ENCODE measurements at regions of chr16 and their contacts with region 1.

Region 1: DNA sequence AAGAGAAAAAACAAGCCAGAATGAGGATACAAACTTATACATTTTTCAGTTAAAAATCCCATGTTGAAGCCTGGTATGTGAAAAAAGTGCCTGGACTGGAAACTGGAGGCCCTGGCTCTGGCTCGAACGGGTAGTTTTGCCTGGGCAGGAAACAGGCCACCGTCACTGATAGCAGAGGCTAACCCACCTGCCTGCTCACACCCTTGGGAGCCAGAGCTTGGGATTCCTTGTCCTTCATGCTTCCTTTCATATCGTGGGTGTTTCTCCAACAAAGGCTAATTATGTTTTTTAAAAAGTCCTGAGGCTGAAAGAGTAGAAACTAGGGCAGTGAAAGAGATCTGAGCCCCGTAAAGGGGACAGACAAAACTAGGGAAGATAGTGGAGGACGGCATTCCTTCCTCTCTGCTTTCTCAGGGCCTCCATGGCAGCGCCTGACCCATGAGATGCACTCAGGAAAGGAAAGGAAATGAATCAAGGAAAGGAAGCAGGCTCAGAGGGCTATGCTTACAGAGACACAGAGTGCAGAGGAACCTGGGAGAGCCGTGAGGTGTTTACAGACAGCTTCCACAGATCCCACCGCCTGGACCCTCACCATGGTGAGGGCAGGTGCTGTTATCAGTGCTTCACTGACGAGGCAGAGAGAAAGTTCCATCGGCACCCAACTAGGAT is 138.1 kb downstream of the PARN start:
- DNase-seq: no peak
- H3K4me3 ChIP-seq: no peak overlapping the region
- CTCF ChIP-seq: no peak

Region 2: DNA sequence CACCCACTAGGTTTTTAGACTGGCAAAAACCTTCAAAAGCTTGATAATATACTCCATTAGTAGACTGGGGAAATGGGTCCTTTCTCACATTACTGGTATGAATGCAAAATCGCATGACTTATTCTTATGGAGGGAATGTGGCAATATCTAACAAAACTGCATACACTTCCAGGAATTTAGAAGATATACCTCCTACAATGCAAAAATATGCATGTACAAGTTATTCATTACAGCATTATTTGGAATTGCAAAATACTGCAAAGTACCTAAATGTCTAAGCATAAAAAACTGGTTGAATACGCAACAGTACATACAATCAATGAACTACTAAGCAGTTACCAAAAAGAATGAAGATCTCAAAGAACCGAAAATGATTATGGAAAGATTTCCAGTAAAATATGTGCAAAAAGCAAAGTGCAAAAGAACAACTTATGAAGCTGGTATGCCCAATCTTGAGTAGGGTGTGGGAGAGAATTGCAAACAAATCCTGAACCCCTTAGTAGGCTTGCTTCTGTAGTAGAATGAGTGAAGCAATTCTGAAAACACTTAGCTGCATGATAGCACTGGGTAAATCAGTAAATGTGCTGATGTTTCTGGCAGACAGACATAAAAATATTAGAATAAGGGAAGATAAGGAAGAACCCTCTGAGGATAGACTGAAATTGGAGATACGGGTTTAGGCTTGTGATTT is 42.1 kb before region 1 on chr16:
- in situ Hi-C with region 1: loop called (anchors 5 kb)
- DNase-seq: no peak
- H3K4me3 ChIP-seq: no peak overlapping the region
- CTCF ChIP-seq: no peak

Measured in astrocyte of the cerebellum (primary cell).